ENCODE measurements at regions of chr2 and their contacts with region 1.

Region 1: DNA sequence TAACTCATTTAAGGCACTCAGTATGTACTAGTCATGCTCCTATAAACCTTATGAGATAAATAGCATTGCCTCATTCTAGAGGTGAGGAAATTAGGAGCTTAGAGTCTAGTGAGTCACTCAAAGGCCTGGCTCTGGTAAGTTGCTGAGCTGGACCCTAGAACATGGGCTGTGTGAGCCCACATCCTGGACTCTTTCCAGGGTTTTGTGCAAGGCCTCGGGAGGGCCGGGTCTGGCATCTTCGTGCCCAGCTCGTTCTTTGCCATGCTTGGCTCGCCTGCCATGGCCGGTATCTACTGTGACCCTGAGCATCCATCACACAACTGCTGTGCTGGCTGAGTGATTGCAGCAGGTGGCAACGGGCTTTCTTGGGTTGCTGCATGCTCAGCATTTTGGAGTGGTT is 168.0 kb downstream of the LPIN1 start:
- DNase-seq: peak; percentile 99
- H3K4me3 Mint-ChIP-seq: no peak overlapping the region
- H3K27ac Mint-ChIP-seq: peak overlapping the region; percentile 84
- H3K4me1 Mint-ChIP-seq: peaks cover 25% of the 10 kb centered on the region
- H3K27me3 Mint-ChIP-seq: no peaks in the 10 kb centered on the region
- CTCF ChIP-seq: no peak

Region 2: DNA sequence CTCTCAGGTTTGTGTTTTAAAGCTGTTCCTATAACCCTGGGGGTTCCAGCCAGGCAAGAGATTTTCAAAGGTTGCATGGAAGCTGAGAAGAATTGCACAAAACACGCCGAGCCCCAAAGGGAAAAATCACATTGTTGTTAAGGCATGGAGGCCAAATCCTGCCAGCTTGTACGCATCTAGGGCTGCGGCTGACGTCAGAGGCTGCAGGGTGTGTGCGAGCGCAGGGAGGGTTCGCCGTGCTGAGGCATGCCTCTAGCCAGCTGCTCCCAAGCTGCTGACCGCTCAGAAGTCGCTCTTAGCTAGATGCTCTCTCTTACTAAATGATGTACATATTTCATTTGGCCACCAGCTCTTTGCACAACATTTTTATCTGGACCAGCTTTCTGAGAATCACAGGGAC is 23.7 kb after region 1 on chr2:
- CTCF ChIA-PET with region 1: interaction called, 11 read pairs
- POLR2A ChIA-PET with region 1: interaction called, 14 read pairs
- intact Hi-C with region 1: no loop called
- DNase-seq: peak; percentile 94
- H3K4me3 Mint-ChIP-seq: peak overlapping the region; percentile 45
- H3K27ac Mint-ChIP-seq: peak overlapping the region; percentile 96
- H3K4me1 Mint-ChIP-seq: peaks cover 22% of the 10 kb centered on the region
- H3K27me3 Mint-ChIP-seq: no peaks in the 10 kb centered on the region
- CTCF ChIP-seq: no peak

Measured in MCF 10A (cell line).